Left cardiac atrium (tissue), 4 donors: ENCODE measurements at regions of chr2 and their contacts with region 1.

Region 1: GRCh38 chr2:38665854-38666555 is at the start of gene GALM:
- DNase-seq: peak; percentile 86
- ATAC-seq: peak; percentile 95 to 96
- total RNA-seq, gene GALM: 9.2 to 16.8 TPM

Region 2: DNA sequence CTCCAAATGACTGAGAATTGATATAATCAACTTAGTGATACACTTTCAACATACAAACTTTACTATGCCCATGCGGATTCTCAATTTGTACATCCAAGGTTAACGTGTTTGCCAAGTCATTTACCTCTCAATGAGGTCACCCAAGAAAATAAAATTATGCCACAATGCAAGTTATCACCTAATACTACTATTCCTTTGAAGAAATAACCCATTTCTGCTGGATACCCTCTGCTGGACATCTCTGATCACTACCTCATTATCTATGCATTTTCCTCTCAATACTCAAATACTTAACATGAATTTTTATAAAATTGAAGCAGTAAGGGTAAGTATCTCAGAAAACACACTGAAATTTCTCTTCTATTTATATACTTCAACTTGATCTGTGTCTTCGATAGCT is 76.0 kb before region 1 on chr2:
- intact Hi-C with region 1: loop called in 1 of 2 experiments (anchors 10 kb)
- DNase-seq: no peak
- ATAC-seq: no peak

Region 3: DNA sequence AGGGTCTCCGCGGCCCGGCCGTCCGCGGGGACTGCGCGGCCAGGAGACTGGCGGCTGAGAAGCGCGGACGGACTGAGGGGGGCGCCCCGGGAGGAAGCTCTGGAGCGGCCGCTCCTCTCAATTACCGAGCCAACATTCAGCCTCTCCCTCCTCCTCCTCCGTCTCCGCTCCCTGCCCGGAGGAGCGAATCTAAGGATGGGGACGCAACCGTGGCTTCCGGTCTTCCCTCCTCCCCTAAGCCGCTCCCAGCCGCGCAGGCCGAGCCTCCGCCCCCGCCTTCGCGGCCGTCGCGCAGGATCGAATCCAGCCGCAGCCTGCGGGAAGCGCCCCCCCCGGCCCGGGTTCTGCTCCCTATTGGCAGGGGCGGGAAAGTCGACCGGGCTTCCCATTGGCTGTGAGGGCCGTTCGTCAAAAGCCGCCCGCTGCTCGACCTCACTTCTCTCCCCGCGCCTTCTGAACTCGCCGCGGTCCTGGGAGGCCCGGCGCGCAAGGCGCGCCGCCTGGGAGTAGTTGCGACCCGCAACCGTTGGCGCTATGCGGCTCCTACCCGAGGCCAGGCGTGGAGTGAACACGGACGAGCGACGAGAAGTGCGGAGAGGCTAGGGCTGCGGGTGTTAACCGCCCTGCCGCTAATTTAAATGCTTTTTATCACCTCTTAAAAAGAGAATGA is 63.1 kb before region 1 on chr2 and contains the start of gene HNRNPLL:
- intact Hi-C with region 1: loop called (anchors 5 to 10 kb)
- DNase-seq: peak; percentile 98
- ATAC-seq: peak; percentile 95 to 97
- total RNA-seq, gene HNRNPLL: 24.7 to 28.3 TPM

Region 4: DNA sequence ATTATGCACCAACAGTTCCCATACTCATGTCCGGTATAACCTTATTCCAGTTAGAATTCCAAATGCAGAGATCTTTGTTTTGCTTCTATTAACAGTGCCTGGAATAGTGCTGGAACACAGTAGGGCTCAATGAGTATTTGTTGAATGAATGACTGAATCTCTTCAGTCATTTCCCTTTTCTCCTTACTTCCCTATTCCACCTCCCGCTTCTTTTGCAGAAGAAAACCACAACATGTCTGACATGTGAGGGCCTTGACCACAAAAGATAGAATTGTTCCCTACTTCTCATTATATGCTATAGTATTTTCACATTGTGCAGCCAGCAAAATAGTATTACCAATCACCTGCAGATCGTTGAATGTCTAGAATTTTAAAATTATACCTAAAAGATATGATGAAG is 43.8 kb before region 1 on chr2:
- intact Hi-C with region 1: no loop called
- DNase-seq: no peak
- ATAC-seq: no peak

Region 5: DNA sequence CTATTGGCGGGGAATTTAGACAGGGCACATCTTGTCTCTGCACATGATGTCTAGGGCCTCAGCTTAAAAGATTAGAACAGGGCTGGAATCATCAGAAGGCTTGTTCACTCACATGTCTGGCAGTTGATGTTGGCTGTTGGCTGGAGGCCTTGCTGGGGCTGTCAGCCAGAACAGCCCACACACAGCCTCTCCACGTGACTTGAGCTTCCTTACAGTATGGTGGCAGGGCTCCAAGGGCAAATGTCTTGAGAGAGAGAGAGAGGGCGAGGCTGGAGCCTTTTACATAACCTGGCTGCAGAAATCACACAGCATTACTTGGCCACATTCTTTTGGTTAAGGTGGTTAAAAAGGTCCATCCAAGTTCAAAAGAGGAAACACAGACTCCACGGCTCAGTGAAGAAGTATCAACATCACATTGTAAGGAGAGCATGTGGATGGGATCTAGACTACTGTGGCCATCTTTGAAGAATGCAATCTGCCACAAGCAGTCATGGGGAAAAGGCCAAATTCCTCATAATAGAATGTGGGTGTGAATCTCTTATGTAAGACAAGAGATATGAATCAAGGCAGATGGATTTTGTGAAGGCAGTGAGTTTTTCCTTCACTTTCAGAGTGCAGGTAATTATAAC is 54.7 kb after region 1 on chr2:
- intact Hi-C with region 1: loop called in 1 of 2 experiments (anchors 5 kb)
- DNase-seq: peak; percentile 83
- ATAC-seq: peak; percentile 92 to 96